Natural killer cell (primary cell): ENCODE measurements at regions of chr16 and their contacts with region 1.

Region 1: GRCh38 chr16:57757326-57757786 is 21.8 kb downstream of the KATNB1 start:
- DNase-seq: peak; percentile 90 to 96
- ATAC-seq: peak; percentile 93 to 96 (median 94)
- H3K4me3 ChIP-seq: no peak overlapping the region
- H3K4me3 Mint-ChIP-seq: no peak overlapping the region
- H3K27ac ChIP-seq: peak overlapping the region; percentile 48
- H3K27ac Mint-ChIP-seq: peak overlapping the region; percentile 22 to 46
- H3K4me1 ChIP-seq: peaks cover 30% of the 10 kb centered on the region
- H3K4me1 Mint-ChIP-seq: peaks cover 4 to 7% of the 10 kb centered on the region in 2 donors
- H3K27me3 ChIP-seq: no peaks in the 10 kb centered on the region
- H3K27me3 Mint-ChIP-seq: no peaks in the 10 kb centered on the region
- CTCF ChIP-seq: peak; percentile 91

Region 2: GRCh38 chr16:57802341-57803133 is 45.2 kb after region 1 on chr16 and contains the start of gene KIFC3:
- intact Hi-C with region 1: loop called (anchors 5 kb)
- DNase-seq: peak; percentile 81 to 86
- ATAC-seq: peak; percentile 83 to 90 (median 88)
- H3K4me3 ChIP-seq: peak within 1 kb of the TSS; percentile 39
- H3K4me3 Mint-ChIP-seq: peak within 1 kb of the TSS; percentile 98
- H3K27ac ChIP-seq: peak within 1 kb of the TSS; percentile 28
- H3K27ac Mint-ChIP-seq: peak within 1 kb of the TSS; percentile 91 to 96
- H3K4me1 ChIP-seq: peaks cover 45% of the 10 kb centered on the region
- H3K4me1 Mint-ChIP-seq: peaks cover 43 to 48% of the 10 kb centered on the region in 2 donors
- H3K27me3 ChIP-seq: no peaks in the 10 kb centered on the region
- H3K27me3 Mint-ChIP-seq: no peaks in the 10 kb centered on the region
- CTCF ChIP-seq: peak; percentile 23
- total RNA-seq, gene KIFC3: 54.2 to 106 (median 84.9) TPM

Region 3: GRCh38 chr16:57810197-57811031 is 53.1 kb after region 1 on chr16:
- intact Hi-C with region 1: loop called (anchors 1 kb)
- DNase-seq: peak; percentile 82 to 89
- ATAC-seq: peak; percentile 93 to 99 (median 98)
- H3K4me3 ChIP-seq: no peak overlapping the region
- H3K4me3 Mint-ChIP-seq: peak overlapping the region; percentile 69
- H3K27ac ChIP-seq: peak overlapping the region; percentile 52
- H3K27ac Mint-ChIP-seq: peak overlapping the region; percentile 95 to 96
- H3K4me1 ChIP-seq: peaks cover 46% of the 10 kb centered on the region
- H3K4me1 Mint-ChIP-seq: peaks cover 49 to 50% of the 10 kb centered on the region in 2 donors
- H3K27me3 ChIP-seq: no peaks in the 10 kb centered on the region
- H3K27me3 Mint-ChIP-seq: no peaks in the 10 kb centered on the region
- CTCF ChIP-seq: no peak

Region 4: DNA sequence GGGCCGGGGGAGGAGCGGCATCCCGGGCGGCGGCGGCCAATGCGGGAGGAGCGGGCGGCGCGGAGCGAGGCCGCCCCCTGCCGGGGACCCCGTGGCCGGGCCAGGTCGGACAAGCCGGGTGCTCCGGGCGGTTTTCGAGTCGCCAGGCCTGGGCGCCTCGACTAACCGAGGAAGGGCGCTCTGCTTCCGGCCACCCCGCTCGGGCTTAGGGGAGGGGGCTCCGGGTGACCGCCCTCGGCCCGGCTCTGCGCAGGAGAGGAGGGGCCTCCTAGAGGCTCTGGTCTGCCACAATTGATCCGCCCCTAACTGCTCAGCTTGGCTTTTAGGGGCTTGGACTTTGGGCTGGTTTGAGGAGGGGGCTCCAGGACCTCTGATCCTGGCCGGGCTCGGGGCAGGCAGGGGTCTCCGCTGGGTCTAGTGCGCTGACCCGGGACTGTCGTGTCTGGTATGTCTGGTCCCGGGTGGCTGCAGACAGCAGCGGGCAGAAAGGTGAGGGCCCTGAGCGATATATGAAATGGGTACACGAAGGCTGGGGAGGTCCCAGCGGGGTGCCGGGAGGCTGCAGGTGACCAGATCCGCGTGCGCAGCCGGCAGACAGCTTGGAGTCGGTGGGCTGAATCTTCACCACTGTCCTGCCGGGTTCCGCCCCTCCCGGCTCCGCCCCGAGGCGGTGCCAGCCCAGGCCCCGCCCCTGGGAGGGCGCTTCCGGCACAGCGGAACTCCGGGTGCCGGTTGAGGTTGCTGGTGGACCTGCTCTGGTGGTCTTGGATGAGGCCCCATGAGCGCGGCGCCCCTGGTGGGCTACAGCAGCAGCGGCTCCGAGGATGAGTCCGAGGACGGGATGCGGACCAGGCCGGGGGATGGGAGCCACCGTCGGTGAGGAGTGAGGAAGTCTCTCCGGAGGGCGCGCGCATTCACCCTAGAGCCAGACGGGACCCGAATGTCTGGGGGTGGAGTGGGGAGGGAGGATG is 243.6 kb after region 1 on chr16 and contains the start of gene USB1:
- intact Hi-C with region 1: loop called (anchors 1 kb)
- DNase-seq: peak; percentile 91 to 92
- ATAC-seq: peak; percentile 78 to 92 (median 80)
- H3K4me3 ChIP-seq: peak within 1 kb of the TSS; percentile 84
- H3K4me3 Mint-ChIP-seq: peak within 1 kb of the TSS; percentile 92
- H3K27ac ChIP-seq: peak within 1 kb of the TSS; percentile 86
- H3K27ac Mint-ChIP-seq: peak within 1 kb of the TSS; percentile 86 to 90
- H3K4me1 ChIP-seq: peaks cover 56% of the 10 kb centered on the region
- H3K4me1 Mint-ChIP-seq: peaks cover 55 to 64% of the 10 kb centered on the region in 2 donors
- H3K27me3 ChIP-seq: no peaks in the 10 kb centered on the region
- H3K27me3 Mint-ChIP-seq: no peaks in the 10 kb centered on the region
- CTCF ChIP-seq: peak; percentile 81
- total RNA-seq, gene USB1: 64.7 to 86.0 (median 84.8) TPM